ENCODE measurements at regions of chr20 and their contacts with region 1.

Region 1: DNA sequence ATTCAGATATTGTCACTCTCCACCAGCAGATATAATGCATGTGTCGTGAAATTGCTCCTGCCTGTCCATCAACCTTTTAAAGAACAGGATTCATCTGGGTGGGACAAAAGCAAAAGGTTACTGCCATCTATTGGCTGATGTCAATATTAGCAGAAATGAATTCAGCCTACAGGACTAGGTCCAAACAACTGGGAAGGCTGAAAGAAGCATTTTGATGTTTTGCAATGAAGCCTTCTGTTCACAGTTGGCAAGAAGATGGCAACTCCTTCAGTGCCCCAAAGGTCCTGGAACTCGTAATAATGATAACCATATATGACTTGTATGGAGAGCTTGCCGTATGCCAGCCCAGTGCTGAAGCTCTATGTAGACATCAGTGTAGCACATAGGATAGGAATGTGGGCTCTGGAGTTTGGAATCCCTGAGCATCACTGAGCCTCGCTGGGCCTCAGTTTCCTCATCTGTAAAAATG is 7.5 kb downstream of the BCAS1 start:
- DNase-seq: peak; percentile 79
- ATAC-seq: peak; percentile 49
- H3K4me3 ChIP-seq: no peak overlapping the region
- H3K27ac ChIP-seq: no peak overlapping the region
- H3K4me1 ChIP-seq: peaks cover 15% of the 10 kb centered on the region
- H3K27me3 ChIP-seq: no peaks in the 10 kb centered on the region
- CTCF ChIP-seq: peak; percentile 95

Region 2: GRCh38 chr20:52312132-52312729 is 1750.6 kb before region 1 on chr20:
- CTCF ChIA-PET with region 1: no interaction called
- POLR2A ChIA-PET with region 1: no interaction called
- intact Hi-C with region 1: loop called (anchors 2 kb)
- DNase-seq: peak; percentile 90
- ATAC-seq: peak; percentile 46
- H3K4me3 ChIP-seq: no peak overlapping the region
- H3K27ac ChIP-seq: no peak overlapping the region
- H3K4me1 ChIP-seq: peaks cover 4% of the 10 kb centered on the region; the same call in 1 of the 2 replicates
- H3K27me3 ChIP-seq: peaks cover 61% of the 10 kb centered on the region
- CTCF ChIP-seq: peak; percentile 98

Region 3: GRCh38 chr20:53949319-53949889 is 113.4 kb before region 1 on chr20:
- CTCF ChIA-PET with region 1: no interaction called
- POLR2A ChIA-PET with region 1: no interaction called
- intact Hi-C with region 1: loop called (anchors 2 kb)
- DNase-seq: peak; percentile 98
- ATAC-seq: peak; percentile 99
- H3K4me3 ChIP-seq: no peak overlapping the region; the same call in 1 of the 2 replicates
- H3K27ac ChIP-seq: peak overlapping the region; percentile 60
- H3K4me1 ChIP-seq: peaks cover 18% of the 10 kb centered on the region
- H3K27me3 ChIP-seq: no peaks in the 10 kb centered on the region
- CTCF ChIP-seq: no peak

Region 4: DNA sequence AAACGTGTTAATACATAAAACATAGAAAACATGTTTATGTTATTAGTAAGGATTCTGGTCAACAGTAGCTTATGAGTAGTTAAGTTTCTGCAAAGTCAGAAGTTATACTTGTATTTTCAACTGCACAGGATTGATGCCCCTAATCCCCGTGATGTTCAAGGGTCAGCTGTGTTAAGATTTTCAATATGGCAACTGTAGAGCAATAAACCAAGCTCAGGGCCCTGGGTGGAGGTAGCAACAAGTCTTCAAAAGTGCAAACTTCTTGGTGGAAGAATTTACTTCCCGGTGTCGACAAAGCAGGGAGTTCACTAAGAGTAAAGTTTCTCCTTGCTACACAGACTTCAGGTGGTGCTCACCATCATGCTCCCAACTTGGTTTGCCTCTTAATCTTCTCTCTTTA is 11.7 kb after region 1 on chr20:
- CTCF ChIA-PET with region 1: no interaction called
- POLR2A ChIA-PET with region 1: no interaction called
- intact Hi-C with region 1: no loop called
- DNase-seq: no peak
- ATAC-seq: no peak
- H3K4me3 ChIP-seq: no peak overlapping the region
- H3K27ac ChIP-seq: no peak overlapping the region
- H3K4me1 ChIP-seq: peaks cover 13% of the 10 kb centered on the region
- H3K27me3 ChIP-seq: no peaks in the 10 kb centered on the region
- CTCF ChIP-seq: no peak

Region 5: GRCh38 chr20:54084727-54085388 is 22.0 kb after region 1 on chr20:
- CTCF ChIA-PET with region 1: no interaction called
- POLR2A ChIA-PET with region 1: no interaction called
- intact Hi-C with region 1: loop called (anchors 1 kb)
- DNase-seq: peak; percentile 92
- ATAC-seq: peak; percentile 93
- H3K4me3 ChIP-seq: no peak overlapping the region
- H3K27ac ChIP-seq: no peak overlapping the region
- H3K4me1 ChIP-seq: peaks cover 18% of the 10 kb centered on the region
- H3K27me3 ChIP-seq: no peaks in the 10 kb centered on the region
- CTCF ChIP-seq: no peak

Region 6: GRCh38 chr20:54132612-54133433 is 70.0 kb after region 1 on chr20:
- CTCF ChIA-PET with region 1: no interaction called
- POLR2A ChIA-PET with region 1: no interaction called
- intact Hi-C with region 1: loop called (anchors 2 kb)
- DNase-seq: peak; percentile 99
- ATAC-seq: peak; percentile 79
- H3K4me3 ChIP-seq: peak overlapping the region; percentile 34
- H3K27ac ChIP-seq: peak overlapping the region; percentile 91
- H3K4me1 ChIP-seq: peaks cover 44% of the 10 kb centered on the region
- H3K27me3 ChIP-seq: no peaks in the 10 kb centered on the region
- CTCF ChIP-seq: no peak

Measured in PC-3 (cell line).